Naive thymus-derived CD8-positive, alpha-beta T cell (primary cell): ENCODE measurements at regions of chr15 and their contacts with region 1.

Region 1: DNA sequence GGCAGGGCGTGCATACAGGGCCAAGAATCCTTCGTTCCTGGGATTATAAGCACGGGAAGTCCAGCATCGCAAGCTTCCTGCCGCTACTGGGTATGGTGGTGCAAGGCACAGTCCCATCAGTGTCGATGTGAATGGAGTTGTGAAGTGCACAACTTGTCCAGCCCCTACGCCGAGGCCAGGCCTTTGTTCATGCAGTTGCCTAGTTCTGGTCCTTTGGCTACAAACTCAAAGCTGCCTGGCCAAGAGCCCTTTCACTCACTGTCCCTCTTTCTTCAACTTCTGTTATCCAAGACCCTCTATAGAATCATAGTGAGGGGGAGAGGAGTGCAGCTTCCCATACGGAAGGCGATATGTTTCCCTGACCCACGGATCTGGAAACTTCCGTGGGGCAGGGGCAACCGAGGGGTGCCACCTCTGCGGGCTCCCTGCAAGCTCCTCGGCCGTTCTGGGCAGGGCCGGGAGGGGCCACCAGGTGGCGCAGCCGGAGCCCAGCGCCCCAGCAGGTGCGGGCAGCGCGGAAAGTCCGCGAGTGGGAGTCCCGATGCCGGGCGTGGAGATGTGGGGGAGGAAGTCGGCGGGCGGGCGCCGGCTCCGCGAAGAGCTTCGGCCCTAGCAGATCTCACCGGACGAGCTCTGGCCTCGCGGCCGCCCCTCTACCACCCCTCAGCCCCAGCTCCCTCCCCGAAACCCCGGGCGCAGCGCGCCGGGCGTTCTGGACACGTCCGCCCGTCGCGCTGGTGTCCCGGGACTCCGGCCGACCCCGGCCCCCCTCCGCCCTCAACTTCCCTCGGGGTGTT is 693 bp downstream of the RASGRP1 start:
- DNase-seq: peak; percentile 73 to 88 (median 85)
- ATAC-seq: peak; percentile 72 to 74
- H3K4me3 Mint-ChIP-seq: peak overlapping the region; percentile 92 to 99 (median 98)
- H3K27ac Mint-ChIP-seq: peak overlapping the region; percentile 92 to 98 (median 96)
- H3K4me1 Mint-ChIP-seq: peaks cover 26 to 73% (median 65%) of the 10 kb centered on the region in 4 donors
- H3K27me3 Mint-ChIP-seq: no peaks in the 10 kb centered on the region

Region 2: DNA sequence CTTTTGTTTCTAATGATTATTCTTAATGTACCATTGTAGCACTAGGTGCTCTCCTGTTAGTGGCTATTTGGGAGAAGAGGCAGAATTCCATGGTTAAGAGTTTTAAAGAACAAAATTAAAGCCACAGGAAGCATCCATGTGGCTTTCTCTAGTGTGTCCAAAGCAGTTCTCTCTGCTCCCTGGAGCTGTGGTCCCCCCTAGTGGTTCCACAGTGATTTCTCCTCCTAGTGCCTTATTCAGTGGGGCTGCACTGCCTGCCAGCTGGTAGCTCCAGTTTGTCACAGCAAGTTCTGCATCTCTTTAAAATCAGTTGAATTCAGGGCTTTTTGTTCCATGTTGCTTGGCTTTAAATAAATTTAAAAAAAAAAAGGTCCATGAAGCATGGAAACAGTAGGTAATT is 149.6 kb before region 1 on chr15:
- POLR2A ChIA-PET with region 1: no interaction called
- DNase-seq: no peak
- ATAC-seq: no peak
- H3K4me3 Mint-ChIP-seq: no peak overlapping the region
- H3K27ac Mint-ChIP-seq: no peak overlapping the region
- H3K4me1 Mint-ChIP-seq: no peaks in the 10 kb centered on the region
- H3K27me3 Mint-ChIP-seq: peaks cover 17 to 44% (median 32%) of the 10 kb centered on the region in 5 donors

Region 3: DNA sequence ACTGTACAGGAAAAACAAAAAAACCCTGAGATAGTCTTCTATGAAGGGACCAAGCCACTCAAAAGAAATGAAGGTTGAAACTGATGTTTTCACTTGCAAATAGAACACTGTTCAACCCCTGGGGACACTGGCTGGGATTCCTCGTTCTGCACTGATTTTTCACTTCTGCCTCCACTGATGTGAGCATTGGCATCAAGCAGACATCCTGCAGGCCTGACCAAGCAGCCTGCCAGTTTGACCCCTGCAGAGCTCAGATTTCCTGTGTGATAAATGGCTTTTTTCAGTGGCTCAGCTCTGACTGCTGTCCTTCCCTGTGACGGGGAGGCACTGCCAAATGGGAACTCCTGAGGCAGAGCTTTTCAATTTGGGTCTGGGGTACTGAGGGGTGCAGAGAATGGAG is 49.3 kb before region 1 on chr15:
- POLR2A ChIA-PET with region 1: no interaction called
- DNase-seq: no peak
- ATAC-seq: no peak
- H3K4me3 Mint-ChIP-seq: no peak overlapping the region
- H3K27ac Mint-ChIP-seq: peak overlapping the region; percentile 35 to 87 (median 68)
- H3K4me1 Mint-ChIP-seq: peaks cover 6 to 32% (median 14%) of the 10 kb centered on the region in 4 donors
- H3K27me3 Mint-ChIP-seq: no peaks in the 10 kb centered on the region

Region 4: DNA sequence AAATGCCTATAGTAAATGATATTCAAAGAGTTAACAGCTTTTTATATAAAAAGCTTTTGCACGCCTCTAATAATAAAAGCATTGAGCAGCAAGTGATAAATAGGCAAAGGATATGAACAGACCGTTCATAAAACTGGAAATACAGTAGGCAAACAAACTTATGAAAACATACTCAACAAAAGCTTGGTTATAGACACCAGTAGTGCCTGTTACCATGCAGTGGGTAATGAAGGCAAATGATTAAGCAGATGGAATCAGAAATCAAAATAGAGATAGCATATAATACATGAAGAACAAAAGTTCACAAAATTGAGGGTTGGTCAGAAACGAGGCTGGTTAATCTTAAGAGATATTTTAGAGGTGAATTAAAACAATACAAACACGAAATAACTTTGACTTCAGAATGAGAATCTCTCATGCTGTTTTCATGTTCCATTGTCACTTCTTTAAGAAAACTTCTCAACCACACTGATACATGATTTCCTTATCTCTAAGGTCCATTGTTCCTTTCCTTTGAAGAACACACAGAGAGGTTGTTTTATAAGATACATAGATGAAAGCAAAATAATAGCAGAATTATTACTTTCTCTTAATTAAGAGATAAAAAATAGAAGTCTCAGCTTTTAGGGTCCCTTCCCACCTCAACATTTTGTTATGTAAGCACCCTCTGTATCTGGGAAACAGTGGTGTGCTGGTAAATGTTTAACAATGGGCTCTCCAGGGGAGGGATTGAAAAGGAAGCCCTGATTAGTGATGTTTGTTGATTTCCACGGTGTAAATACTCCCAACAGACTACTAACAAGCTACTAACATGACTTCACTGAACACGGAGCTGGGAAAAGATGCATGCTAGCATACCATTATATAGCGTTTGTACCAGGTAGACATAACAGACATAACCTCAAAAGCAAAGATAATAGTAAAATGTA is 11.9 kb before region 1 on chr15:
- POLR2A ChIA-PET with region 1: interaction called, 12 read pairs
- DNase-seq: no peak
- ATAC-seq: no peak
- H3K4me3 Mint-ChIP-seq: peak overlapping the region in 9 of 10 donors; percentile 50 to 95 (median 68)
- H3K27ac Mint-ChIP-seq: peak overlapping the region; percentile 48 to 98 (median 87)
- H3K4me1 Mint-ChIP-seq: peaks cover 56 to 93% (median 91%) of the 10 kb centered on the region in 4 donors
- H3K27me3 Mint-ChIP-seq: no peaks in the 10 kb centered on the region

Region 5: GRCh38 chr15:38600236-38600635 is 36.3 kb after region 1 on chr15:
- POLR2A ChIA-PET with region 1: no interaction called
- DNase-seq: no peak
- ATAC-seq: no peak
- H3K4me3 Mint-ChIP-seq: no peak overlapping the region
- H3K27ac Mint-ChIP-seq: peak overlapping the region in 1 of 10 donors; percentile 9
- H3K4me1 Mint-ChIP-seq: peaks cover 0 to 12% (median 7%) of the 10 kb centered on the region in 4 donors
- H3K27me3 Mint-ChIP-seq: no peaks in the 10 kb centered on the region

Region 6: GRCh38 chr15:38647683-38648082 is 83.8 kb after region 1 on chr15:
- POLR2A ChIA-PET with region 1: interaction called, 163 read pairs
- DNase-seq: no peak
- ATAC-seq: no peak
- H3K4me3 Mint-ChIP-seq: peak overlapping the region in 5 of 10 donors; percentile 33 to 76 (median 61)
- H3K27ac Mint-ChIP-seq: peak overlapping the region in 9 of 10 donors; percentile 56 to 98 (median 94)
- H3K4me1 Mint-ChIP-seq: peaks cover 27 to 78% (median 74%) of the 10 kb centered on the region in 4 donors
- H3K27me3 Mint-ChIP-seq: no peaks in the 10 kb centered on the region

Region 7: GRCh38 chr15:38660738-38661137 is 96.8 kb after region 1 on chr15:
- POLR2A ChIA-PET with region 1: interaction called, 14 read pairs
- DNase-seq: no peak
- ATAC-seq: peak; percentile 52 to 59
- H3K4me3 Mint-ChIP-seq: peak overlapping the region in 9 of 10 donors; percentile 39 to 81 (median 60)
- H3K27ac Mint-ChIP-seq: peak overlapping the region in 9 of 10 donors; percentile 71 to 93 (median 82)
- H3K4me1 Mint-ChIP-seq: peaks cover 31 to 75% (median 67%) of the 10 kb centered on the region in 4 donors
- H3K27me3 Mint-ChIP-seq: no peaks in the 10 kb centered on the region

Region 8: GRCh38 chr15:38671675-38672254 is 107.8 kb after region 1 on chr15:
- POLR2A ChIA-PET with region 1: interaction called, 34 read pairs
- DNase-seq: peak in 8 of 10 donors; percentile 38 to 73 (median 55)
- ATAC-seq: peak; percentile 52 to 70
- H3K4me3 Mint-ChIP-seq: peak overlapping the region; percentile 46 to 79 (median 70)
- H3K27ac Mint-ChIP-seq: peak overlapping the region; percentile 91 to 99 (median 98)
- H3K4me1 Mint-ChIP-seq: peaks cover 42 to 83% (median 77%) of the 10 kb centered on the region in 4 donors
- H3K27me3 Mint-ChIP-seq: no peaks in the 10 kb centered on the region

Region 9: GRCh38 chr15:38683382-38684242 is 119.7 kb after region 1 on chr15:
- POLR2A ChIA-PET with region 1: interaction called, 206 read pairs
- DNase-seq: peak; percentile 41 to 82 (median 68)
- ATAC-seq: peak; percentile 46 to 51
- H3K4me3 Mint-ChIP-seq: peak overlapping the region in 9 of 10 donors; percentile 3 to 81 (median 61)
- H3K27ac Mint-ChIP-seq: peak overlapping the region; percentile 83 to 97 (median 94)
- H3K4me1 Mint-ChIP-seq: peaks cover 49 to 76% (median 72%) of the 10 kb centered on the region in 4 donors
- H3K27me3 Mint-ChIP-seq: no peaks in the 10 kb centered on the region

Region 10: DNA sequence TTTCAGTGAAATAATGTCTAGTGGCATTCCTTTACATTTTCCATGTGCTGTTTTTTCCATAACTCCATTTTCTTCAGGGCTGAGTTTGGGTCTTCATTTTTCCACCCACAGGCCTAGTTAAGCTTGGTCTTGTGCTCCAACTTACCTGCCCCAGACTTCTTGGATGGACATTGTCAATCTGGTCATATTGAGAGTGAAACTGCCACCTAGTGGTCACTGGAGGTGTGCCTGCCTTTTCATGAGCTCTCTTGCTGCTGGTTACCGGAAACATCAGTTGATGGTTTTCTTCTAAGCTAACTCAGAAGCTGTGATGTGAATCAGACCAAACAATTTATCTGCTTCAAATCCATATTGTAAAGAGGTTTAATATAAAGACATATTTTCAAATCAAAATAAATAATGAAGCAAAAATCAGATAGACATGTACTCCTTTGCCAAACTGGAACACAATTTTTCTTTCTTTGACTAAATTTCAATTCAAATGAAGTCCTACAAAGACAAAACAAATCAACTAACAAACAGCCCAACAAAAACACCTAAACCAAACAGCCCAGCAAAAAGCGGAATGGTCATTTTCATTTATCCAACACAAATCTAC is 135.8 kb after region 1 on chr15:
- POLR2A ChIA-PET with region 1: interaction called, 17 read pairs
- DNase-seq: peak; percentile 34 to 86 (median 63)
- ATAC-seq: peak; percentile 73 to 80
- H3K4me3 Mint-ChIP-seq: peak overlapping the region in 3 of 10 donors; percentile 9 to 61 (median 47)
- H3K27ac Mint-ChIP-seq: peak overlapping the region in 8 of 10 donors; percentile 47 to 90 (median 64)
- H3K4me1 Mint-ChIP-seq: peaks cover 12 to 56% (median 48%) of the 10 kb centered on the region in 4 donors
- H3K27me3 Mint-ChIP-seq: no peaks in the 10 kb centered on the region